GM10248 (cell line): ENCODE measurements at regions of chr14 and their contacts with region 1.

Region 1: DNA sequence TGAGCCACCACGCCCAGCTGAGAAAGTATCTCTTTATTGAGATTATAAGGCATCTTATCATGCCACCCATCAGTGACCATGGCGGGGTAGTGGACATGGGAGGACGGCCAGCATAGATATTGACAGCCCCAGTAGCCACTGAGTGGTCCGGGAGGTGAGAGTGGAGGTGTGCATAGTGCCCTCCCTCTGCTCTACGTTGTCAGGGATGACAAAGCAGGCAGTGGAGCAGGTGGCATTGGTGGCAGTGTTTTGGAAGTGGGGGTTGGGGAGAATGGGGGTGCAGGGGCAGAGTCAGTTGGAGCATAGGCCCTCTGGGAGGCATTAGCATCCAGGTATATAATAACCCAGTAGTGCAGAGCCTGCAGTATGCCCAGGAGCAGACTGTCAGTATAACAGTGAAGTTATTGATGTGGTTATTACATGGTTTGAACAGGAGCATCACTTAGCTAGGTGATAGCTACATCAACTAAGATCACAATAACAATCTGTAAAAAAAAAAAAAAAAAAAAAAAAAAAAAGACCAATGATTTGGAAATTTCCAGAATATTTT is 41.1 kb downstream of the GNG2 start:
- DNase-seq: no peak
- CTCF ChIP-seq: no peak

Region 2: GRCh38 chr14:51889851-51890250 is 11.7 kb before region 1 on chr14:
- CTCF ChIA-PET with region 1: interaction called, 40 read pairs
- POLR2A ChIA-PET with region 1: no interaction called
- DNase-seq: no peak
- CTCF ChIP-seq: no peak

Region 3: GRCh38 chr14:51912112-51912786 is 10.7 kb after region 1 on chr14:
- CTCF ChIA-PET with region 1: interaction called, 12 read pairs
- POLR2A ChIA-PET with region 1: no interaction called
- DNase-seq: no peak
- CTCF ChIP-seq: no peak

Region 4: GRCh38 chr14:52154992-52155650 is 253.6 kb after region 1 on chr14:
- CTCF ChIA-PET with region 1: no interaction called
- POLR2A ChIA-PET with region 1: no interaction called
- DNase-seq: no peak
- CTCF ChIP-seq: no peak